T-cell (primary cell): ENCODE measurements at regions of chr1 and their contacts with region 1.

Region 1: GRCh38 chr1:53278201-53278725 is 39.9 kb upstream of the MAGOH start:
- DNase-seq: peak; percentile 15 to 77 (median 64)
- ATAC-seq: peak; percentile 60 to 75 (median 70)
- H3K4me3 ChIP-seq: no peak overlapping the region
- H3K4me3 Mint-ChIP-seq: no peak overlapping the region
- H3K27ac ChIP-seq: no peak overlapping the region
- H3K27ac Mint-ChIP-seq: no peak overlapping the region
- H3K4me1 ChIP-seq: no peaks in the 10 kb centered on the region
- H3K4me1 Mint-ChIP-seq: no peaks in the 10 kb centered on the region
- H3K27me3 ChIP-seq: no peaks in the 10 kb centered on the region
- H3K27me3 Mint-ChIP-seq: no peaks in the 10 kb centered on the region

Region 2: GRCh38 chr1:53344891-53345838 is 66.9 kb after region 1 on chr1:
- CTCF ChIA-PET with region 1: no interaction called
- POLR2A ChIA-PET with region 1: no interaction called
- DNase-seq: peak in 2 of 35 experiments; percentile 2
- ATAC-seq: no peak
- H3K4me3 ChIP-seq: no peak overlapping the region
- H3K4me3 Mint-ChIP-seq: no peak overlapping the region
- H3K27ac ChIP-seq: no peak overlapping the region
- H3K27ac Mint-ChIP-seq: no peak overlapping the region
- H3K4me1 ChIP-seq: no peaks in the 10 kb centered on the region
- H3K4me1 Mint-ChIP-seq: peaks cover 0 to 2% (median 0%) of the 10 kb centered on the region in 3 donors
- H3K27me3 ChIP-seq: peaks cover 0 to 17% of the 10 kb centered on the region in 2 experiments
- H3K27me3 Mint-ChIP-seq: no peaks in the 10 kb centered on the region

Region 3: DNA sequence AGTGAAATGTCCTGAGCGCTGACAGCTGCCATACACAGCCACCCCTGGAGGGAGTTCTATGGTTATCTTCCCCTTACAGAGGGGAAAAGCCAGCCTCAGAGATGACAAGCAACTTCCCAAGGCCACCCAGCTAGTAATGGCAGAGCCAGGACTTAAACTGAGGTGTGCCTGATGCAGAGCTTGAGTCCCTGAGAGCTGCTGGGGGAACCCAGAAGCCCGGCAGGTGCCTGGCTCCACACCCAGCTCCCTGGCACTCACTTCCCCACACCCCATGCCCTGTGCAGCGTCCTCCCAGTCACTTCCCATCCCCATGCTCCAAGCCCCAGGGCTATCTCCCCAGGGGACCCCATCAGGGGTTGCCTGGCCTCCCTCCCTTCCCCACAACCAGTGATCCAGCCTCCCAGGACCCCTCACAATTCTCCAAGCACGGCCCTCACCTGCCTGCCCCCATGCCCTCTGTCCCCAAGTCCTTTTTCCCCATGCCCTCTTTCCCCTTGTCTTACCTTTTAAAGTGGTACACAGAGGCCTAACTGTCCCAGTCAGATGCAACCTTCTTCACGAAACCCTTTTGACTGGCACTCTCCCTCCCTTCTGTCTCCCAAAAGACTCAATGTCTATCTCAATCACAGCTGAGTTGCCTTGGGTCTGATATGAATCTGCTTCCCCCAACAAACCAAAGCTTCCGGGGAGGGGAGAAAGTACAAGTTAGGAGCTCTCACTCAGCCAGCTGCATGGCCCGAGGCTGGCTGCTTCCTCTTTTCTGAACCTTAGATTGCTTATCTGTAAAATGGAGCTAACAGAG is 89.4 kb after region 1 on chr1:
- CTCF ChIA-PET with region 1: no interaction called
- POLR2A ChIA-PET with region 1: no interaction called
- DNase-seq: peak in 30 of 35 experiments; percentile 3 to 59 (median 22)
- ATAC-seq: peak; percentile 87 to 93 (median 92)
- H3K4me3 ChIP-seq: peak overlapping the region; percentile 27 to 78
- H3K4me3 Mint-ChIP-seq: peak overlapping the region; percentile 79 to 90 (median 85)
- H3K27ac ChIP-seq: peak overlapping the region; percentile 54
- H3K27ac Mint-ChIP-seq: peak overlapping the region; percentile 97 to 98
- H3K4me1 ChIP-seq: peaks cover 4 to 35% of the 10 kb centered on the region in 2 experiments
- H3K4me1 Mint-ChIP-seq: peaks cover 28 to 39% (median 35%) of the 10 kb centered on the region in 3 donors
- H3K27me3 ChIP-seq: no peaks in the 10 kb centered on the region
- H3K27me3 Mint-ChIP-seq: no peaks in the 10 kb centered on the region

Region 4: GRCh38 chr1:53393325-53393792 is 115.1 kb after region 1 on chr1:
- CTCF ChIA-PET with region 1: interaction called, 22 to 23 read pairs
- POLR2A ChIA-PET with region 1: interaction called in 1 of 2 experiments, 6 read pairs
- DNase-seq: peak in 33 of 35 experiments; percentile 19 to 77 (median 56)
- ATAC-seq: peak; percentile 67 to 79 (median 72)
- H3K4me3 ChIP-seq: no peak overlapping the region
- H3K4me3 Mint-ChIP-seq: no peak overlapping the region
- H3K27ac ChIP-seq: no peak overlapping the region
- H3K27ac Mint-ChIP-seq: peak overlapping the region in 1 of 2 donors; percentile 72
- H3K4me1 ChIP-seq: peaks cover 0 to 5% of the 10 kb centered on the region in 2 experiments
- H3K4me1 Mint-ChIP-seq: peaks cover 0 to 2% (median 0%) of the 10 kb centered on the region in 3 donors
- H3K27me3 ChIP-seq: peaks cover 0 to 5% of the 10 kb centered on the region in 2 experiments
- H3K27me3 Mint-ChIP-seq: peaks cover 0 to 3% of the 10 kb centered on the region in 2 donors

Region 5: GRCh38 chr1:53410100-53410541 is 131.9 kb after region 1 on chr1:
- CTCF ChIA-PET with region 1: interaction called in 1 of 2 experiments, 11 read pairs
- POLR2A ChIA-PET with region 1: no interaction called
- DNase-seq: peak in 33 of 35 experiments; percentile 10 to 77 (median 34)
- ATAC-seq: peak in 1 of 4 experiments; percentile 67
- H3K4me3 ChIP-seq: no peak overlapping the region
- H3K4me3 Mint-ChIP-seq: peak overlapping the region in 1 of 3 donors; percentile 37
- H3K27ac ChIP-seq: peak overlapping the region; percentile 97
- H3K27ac Mint-ChIP-seq: peak overlapping the region; percentile 99 to 100
- H3K4me1 ChIP-seq: peaks cover 3 to 72% of the 10 kb centered on the region in 2 experiments
- H3K4me1 Mint-ChIP-seq: peaks cover 25 to 66% (median 59%) of the 10 kb centered on the region in 3 donors
- H3K27me3 ChIP-seq: no peaks in the 10 kb centered on the region
- H3K27me3 Mint-ChIP-seq: no peaks in the 10 kb centered on the region